Activated naive CD4-positive, alpha-beta T cell treated with anti-CD3 and anti-CD28 coated beads for 36 hours (primary cell): ENCODE measurements at regions of chr7 and their contacts with region 1.

Region 1: GRCh38 chr7:152675759-152676636 is at the start of gene XRCC2:
- DNase-seq: peak; percentile 93
- H3K4me3 Mint-ChIP-seq: peak within 1 kb of the TSS; percentile 96
- H3K27ac Mint-ChIP-seq: peak within 1 kb of the TSS; percentile 93
- H3K4me1 Mint-ChIP-seq: peaks cover 11% of the 10 kb centered on the region
- H3K27me3 Mint-ChIP-seq: no peaks in the 10 kb centered on the region
- total RNA-seq, gene XRCC2: 10.3 to 10.8 TPM

Region 2: DNA sequence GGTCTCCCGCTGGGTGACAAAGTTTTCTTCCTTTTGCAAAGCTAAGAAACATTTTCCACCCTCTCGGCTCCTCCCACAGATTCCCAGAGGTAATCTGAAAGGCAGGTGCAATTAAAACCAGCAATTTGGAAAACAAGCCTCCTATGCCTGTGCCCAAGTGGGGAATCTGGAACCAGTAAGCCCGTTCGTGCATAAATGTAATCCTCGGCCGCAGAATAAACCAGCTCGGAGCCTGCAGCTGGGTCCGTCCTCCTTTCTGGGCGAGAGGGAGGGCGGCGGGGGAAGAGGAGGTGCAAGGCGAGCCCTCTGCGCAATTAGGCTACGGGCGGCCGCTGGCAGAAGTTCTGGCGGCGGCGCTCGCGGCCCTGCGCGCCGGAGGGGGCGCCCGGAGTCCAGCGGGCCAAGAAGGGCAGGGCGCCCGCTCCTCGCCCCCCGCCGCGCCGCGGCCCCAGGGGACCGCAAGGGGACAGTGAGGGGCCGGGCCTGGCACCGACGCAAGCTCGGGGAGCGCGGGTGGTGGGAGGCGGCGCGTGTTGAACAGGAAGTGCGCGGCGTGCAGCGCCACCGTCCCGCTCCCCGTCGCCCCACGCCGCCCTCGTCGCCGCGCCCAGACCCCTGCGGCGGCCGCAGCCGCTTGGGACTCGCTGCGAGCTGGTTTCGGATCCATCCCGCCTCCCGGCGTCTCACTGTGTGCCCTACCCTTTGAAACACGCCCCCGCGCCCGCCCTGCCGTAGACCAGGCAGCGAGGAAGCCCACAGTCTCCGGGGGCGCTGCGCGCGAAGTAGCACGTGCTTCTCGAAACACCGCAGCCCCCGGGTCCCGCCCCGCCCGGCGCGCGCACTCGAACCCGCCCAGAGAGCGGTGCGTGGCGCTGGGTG is 798.9 kb before region 1 on chr7 and contains the start of gene PRKAG2:
- CTCF ChIA-PET with region 1: no interaction called
- intact Hi-C with region 1: loop called (anchors 10 kb)
- DNase-seq: peak; percentile 63
- H3K4me3 Mint-ChIP-seq: peak within 1 kb of the TSS; percentile 96
- H3K27ac Mint-ChIP-seq: peak within 1 kb of the TSS; percentile 81
- H3K4me1 Mint-ChIP-seq: peaks cover 10% of the 10 kb centered on the region
- H3K27me3 Mint-ChIP-seq: no peaks in the 10 kb centered on the region
- total RNA-seq, gene PRKAG2: 16.9 to 18.7 TPM

Region 3: DNA sequence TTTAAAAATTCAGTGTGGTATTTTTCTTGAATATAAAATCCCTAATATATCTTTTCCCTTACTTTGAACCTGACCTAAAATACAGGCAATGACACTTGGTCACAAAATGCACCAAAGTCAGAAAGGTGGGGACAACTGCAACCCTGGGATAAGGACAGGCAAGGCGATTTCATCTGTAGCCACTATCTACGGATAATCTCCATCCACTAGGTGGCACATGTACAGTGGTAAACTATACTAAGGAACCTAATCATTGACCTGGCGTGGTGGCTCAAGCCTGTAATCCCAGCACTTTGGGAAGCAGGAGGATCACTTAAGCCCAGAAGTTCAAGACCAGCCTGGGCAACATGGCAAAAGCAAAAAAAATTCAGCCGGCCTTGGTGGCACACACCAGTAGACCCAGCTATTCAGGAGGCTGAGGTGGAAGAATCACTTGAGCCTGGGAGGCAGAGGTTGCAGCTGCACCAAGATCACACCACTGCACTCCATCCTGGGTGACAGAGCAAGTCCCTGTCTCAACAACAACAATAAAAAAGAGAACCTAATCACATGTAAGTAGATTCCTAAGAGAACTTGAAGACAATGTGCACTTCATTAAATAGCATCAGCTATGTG is 339.1 kb before region 1 on chr7:
- CTCF ChIA-PET with region 1: no interaction called
- intact Hi-C with region 1: loop called (anchors 10 kb)
- DNase-seq: peak; percentile 11
- H3K4me3 Mint-ChIP-seq: no peak overlapping the region
- H3K27ac Mint-ChIP-seq: no peak overlapping the region
- H3K4me1 Mint-ChIP-seq: peaks cover 49% of the 10 kb centered on the region
- H3K27me3 Mint-ChIP-seq: no peaks in the 10 kb centered on the region

Region 4: GRCh38 chr7:152463709-152464311 is 212.2 kb before region 1 on chr7:
- CTCF ChIA-PET with region 1: no interaction called
- intact Hi-C with region 1: loop called (anchors 1 kb)
- DNase-seq: peak; percentile 100
- H3K4me3 Mint-ChIP-seq: peak overlapping the region; percentile 89
- H3K27ac Mint-ChIP-seq: no peak overlapping the region
- H3K4me1 Mint-ChIP-seq: peaks cover 8% of the 10 kb centered on the region
- H3K27me3 Mint-ChIP-seq: no peaks in the 10 kb centered on the region

Region 5: DNA sequence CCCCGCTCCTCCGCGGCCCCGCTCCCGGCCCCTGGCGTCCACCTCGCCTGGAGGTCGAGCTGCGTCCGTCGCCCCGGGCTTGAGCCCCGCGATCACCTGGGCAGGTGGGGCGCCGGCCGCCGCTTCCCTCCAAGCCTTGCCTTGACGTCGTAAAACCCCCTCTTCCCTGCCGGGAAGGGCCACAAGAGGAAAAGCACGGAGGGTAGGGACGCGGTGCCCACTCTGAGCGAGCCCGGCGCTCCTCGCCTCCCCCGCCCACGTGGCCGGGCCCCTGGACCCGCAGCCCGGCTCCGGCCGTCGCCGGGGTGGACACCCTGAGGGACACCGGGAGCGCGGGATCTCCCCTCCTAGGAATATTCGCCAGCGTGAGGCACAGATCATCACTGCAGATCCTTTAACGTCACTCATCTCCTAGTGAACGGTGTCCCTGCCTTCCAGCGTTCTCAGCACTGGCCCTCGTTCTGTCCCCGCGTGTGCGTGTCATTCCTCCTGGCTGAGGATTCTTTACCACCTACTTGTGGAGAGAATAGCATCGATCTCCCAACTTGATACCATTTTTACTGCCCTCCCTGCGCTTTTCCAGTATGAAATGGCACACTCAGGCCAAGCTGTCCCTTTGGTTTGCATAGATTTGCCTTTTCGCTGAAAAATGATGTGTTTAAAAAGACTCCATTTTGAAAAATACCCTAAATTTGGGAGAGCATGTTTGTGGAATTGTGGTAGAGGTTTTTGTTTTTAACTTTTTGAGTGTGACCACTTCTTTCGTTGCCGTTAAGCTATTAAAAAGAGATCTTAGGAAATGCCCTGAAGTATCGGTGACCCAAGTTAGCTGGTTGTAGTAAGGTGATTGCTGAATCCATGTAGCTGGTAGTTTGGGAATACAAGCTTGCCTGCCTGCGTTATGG is 84.2 kb after region 1 on chr7:
- CTCF ChIA-PET with region 1: no interaction called
- intact Hi-C with region 1: loop called (anchors 1 kb)
- DNase-seq: peak; percentile 31
- H3K4me3 Mint-ChIP-seq: peak overlapping the region; percentile 84
- H3K27ac Mint-ChIP-seq: peak overlapping the region; percentile 79
- H3K4me1 Mint-ChIP-seq: peaks cover 20% of the 10 kb centered on the region
- H3K27me3 Mint-ChIP-seq: no peaks in the 10 kb centered on the region